H1 (cell line): ENCODE measurements at regions of chr9 and their contacts with region 1.

Region 1: GRCh38 chr9:36980148-36980974 is 53.7 kb downstream of the PAX5 start:
- DNase-seq: peak; percentile 53 to 74
- H3K4me3 ChIP-seq: no peak overlapping the region; a peak in 1 of 8 replicates
- H3K27ac ChIP-seq: no peak overlapping the region
- H3K4me1 ChIP-seq: peaks cover 0 to 14% (median 5%) of the 10 kb centered on the region in 4 experiments; a peak in 4 of 7 replicates
- H3K27me3 ChIP-seq: peaks cover 15 to 34% (median 32%) of the 10 kb centered on the region in 4 experiments
- CTCF ChIP-seq: peak; percentile 50 to 63 (median 61)
- EP300 ChIP-seq: no peak
- POLR2A ChIP-seq: no peak
- RAD21 ChIP-seq: peak; percentile 62 to 76

Region 2: DNA sequence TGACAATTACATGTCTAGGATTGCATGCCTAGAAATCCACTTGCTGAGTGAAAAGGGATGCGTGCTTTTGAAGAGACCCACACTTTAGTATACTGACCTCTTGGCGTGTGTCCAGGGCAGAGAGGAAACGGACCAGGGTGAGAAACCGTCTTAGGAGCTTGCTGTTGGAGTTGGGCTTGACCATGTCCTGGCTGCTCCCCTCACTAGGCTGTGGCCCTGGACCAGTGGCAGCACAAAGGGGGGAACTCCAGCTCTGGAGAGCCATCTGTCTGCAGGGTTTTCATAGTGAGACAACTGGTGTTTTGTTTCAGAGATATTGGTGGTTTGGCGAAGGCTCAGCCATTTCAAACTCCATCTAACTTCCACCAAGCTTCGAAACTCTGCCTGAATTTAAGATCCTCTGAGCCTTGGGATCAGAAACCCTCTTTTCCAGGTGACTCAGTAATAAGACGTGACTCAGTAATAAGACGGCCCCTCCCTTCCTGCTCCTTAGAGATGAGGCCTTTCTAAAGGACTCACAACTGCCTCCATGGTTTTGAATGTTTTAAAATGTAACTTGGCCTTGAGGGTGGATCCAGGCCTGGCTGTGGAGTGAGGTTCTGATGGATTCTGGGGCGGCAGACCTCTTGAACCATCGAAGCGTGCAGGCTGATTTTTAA is 241.9 kb before region 1 on chr9:
- CTCF ChIA-PET with region 1: no interaction called
- POLR2A ChIA-PET with region 1: no interaction called
- DNase-seq: no peak
- H3K4me3 ChIP-seq: no peak overlapping the region
- H3K27ac ChIP-seq: no peak overlapping the region
- H3K4me1 ChIP-seq: peaks cover 0 to 11% (median 2%) of the 10 kb centered on the region in 4 experiments; a peak in 3 of 7 replicates
- H3K27me3 ChIP-seq: peaks cover 0 to 5% (median 4%) of the 10 kb centered on the region in 4 experiments; a peak in 3 of 7 replicates
- CTCF ChIP-seq: no peak
- EP300 ChIP-seq: no peak
- POLR2A ChIP-seq: no peak
- RAD21 ChIP-seq: no peak; a peak in 1 of 4 replicates

Region 3: DNA sequence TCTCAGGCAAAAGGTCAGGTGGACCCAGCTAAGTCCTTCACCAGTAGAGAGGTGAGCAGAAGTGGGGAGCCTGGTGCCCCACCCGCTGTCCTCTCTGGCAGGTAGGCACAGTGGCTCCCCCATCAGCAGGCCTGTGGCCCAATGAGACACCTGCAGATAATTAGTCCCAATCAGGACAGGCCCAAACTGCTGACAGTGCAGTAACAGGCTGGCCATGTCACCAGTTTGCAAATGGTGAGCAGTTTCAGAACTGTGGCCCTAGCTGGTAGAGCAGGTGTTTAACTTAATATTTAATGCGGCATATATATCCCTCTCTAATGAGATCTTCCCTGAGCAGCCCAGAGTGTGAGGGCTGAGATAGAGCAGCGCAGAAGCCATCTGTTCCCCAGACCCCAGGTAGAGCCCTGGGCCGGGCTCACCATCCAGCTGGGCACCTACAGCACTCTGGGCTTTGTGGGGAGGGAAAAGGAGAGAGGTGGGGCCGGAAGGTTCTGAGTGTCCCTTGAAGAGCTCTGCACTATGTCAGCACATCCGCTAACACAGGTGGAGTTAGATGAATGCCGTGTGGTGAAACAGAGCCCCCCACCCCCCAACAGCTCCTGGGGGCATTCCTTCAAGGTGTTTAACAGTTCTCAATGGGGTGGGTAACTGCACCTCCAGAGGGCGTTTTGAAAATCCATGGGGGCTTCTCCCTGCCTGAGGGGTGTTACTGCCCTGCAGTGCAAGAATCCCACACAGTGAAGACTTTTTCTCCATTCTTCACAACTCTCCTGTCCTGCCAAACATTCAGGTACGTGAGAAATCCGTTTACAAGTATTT is 66.8 kb before region 1 on chr9:
- CTCF ChIA-PET with region 1: interaction called, 27 read pairs
- POLR2A ChIA-PET with region 1: no interaction called
- DNase-seq: no peak
- H3K4me3 ChIP-seq: no peak overlapping the region
- H3K27ac ChIP-seq: no peak overlapping the region
- H3K4me1 ChIP-seq: peaks cover 3 to 7% (median 4%) of the 10 kb centered on the region in 4 experiments
- H3K27me3 ChIP-seq: no peaks in the 10 kb centered on the region
- CTCF ChIP-seq: peak; percentile 38 to 54 (median 41)
- EP300 ChIP-seq: no peak
- POLR2A ChIP-seq: no peak
- RAD21 ChIP-seq: peak in 1 of 2 experiments; percentile 23; a peak in 1 of 4 replicates

Region 4: GRCh38 chr9:36961561-36962298 is 18.6 kb before region 1 on chr9:
- CTCF ChIA-PET with region 1: interaction called, 42 read pairs
- POLR2A ChIA-PET with region 1: no interaction called
- DNase-seq: peak in 1 of 2 experiments; percentile 43
- H3K4me3 ChIP-seq: no peak overlapping the region
- H3K27ac ChIP-seq: no peak overlapping the region
- H3K4me1 ChIP-seq: no peaks in the 10 kb centered on the region
- H3K27me3 ChIP-seq: no peaks in the 10 kb centered on the region; a peak in 1 of 7 replicates
- CTCF ChIP-seq: no peak
- EP300 ChIP-seq: no peak
- POLR2A ChIP-seq: no peak
- RAD21 ChIP-seq: no peak

Region 5: DNA sequence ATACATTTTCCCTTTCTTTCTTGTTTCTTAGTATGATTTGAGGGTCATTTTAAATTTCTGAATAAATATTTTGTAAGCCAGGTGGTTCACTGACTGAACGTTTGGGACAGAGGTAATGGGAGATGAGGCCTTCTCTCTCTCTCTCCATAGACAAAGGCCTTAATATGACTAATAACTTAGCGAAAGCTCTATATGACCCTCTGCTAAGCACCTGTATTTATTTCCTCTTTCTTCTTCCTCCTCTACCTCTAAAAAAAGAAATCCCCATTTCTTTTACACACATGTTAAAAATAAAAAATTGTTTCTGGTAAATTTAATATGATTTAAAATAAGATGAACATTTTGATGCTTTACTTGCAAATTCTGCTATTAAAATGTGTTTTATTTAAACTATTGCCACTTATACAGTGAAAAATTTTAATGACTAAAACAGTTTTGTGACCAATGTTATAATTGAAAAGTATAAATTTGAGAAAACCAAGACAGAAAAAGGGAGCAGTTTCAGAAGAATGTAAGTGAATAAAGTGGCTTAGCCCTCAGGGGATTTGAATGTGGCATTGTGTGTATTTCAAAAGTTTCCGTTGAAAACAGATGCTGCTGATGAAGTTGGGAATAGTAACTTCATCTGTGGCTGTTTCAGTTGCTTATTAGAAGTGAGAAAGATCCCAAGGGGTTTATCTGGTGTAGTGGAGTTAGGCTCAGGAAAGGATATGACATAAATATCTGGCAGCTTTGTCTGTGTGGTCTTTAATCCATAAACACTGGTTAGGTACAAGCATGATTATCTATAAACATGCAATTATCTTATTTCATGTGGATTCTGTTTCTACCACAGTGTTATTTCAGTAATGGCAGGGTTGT is 313.5 kb after region 1 on chr9:
- CTCF ChIA-PET with region 1: no interaction called
- POLR2A ChIA-PET with region 1: no interaction called
- DNase-seq: no peak
- H3K4me3 ChIP-seq: no peak overlapping the region
- H3K27ac ChIP-seq: no peak overlapping the region
- H3K4me1 ChIP-seq: no peaks in the 10 kb centered on the region; a peak in 2 of 7 replicates
- H3K27me3 ChIP-seq: no peaks in the 10 kb centered on the region; a peak in 1 of 7 replicates
- CTCF ChIP-seq: no peak
- EP300 ChIP-seq: no peak
- POLR2A ChIP-seq: no peak
- RAD21 ChIP-seq: no peak